H1 (cell line): ENCODE measurements at regions of chr22 and their contacts with region 1.

Region 1: GRCh38 chr22:41919357-41920224 is 4.7 kb upstream of the SHISA8 start:
- DNase-seq: peak; percentile 72 to 98
- H3K4me3 ChIP-seq: peak overlapping the region; percentile 33 to 67 (median 34)
- H3K27ac ChIP-seq: no peak overlapping the region
- H3K4me1 ChIP-seq: peaks cover 0 to 18% (median 8%) of the 10 kb centered on the region in 4 experiments; a peak in 5 of 7 replicates
- H3K27me3 ChIP-seq: peaks cover 30 to 82% (median 72%) of the 10 kb centered on the region in 4 experiments
- CTCF ChIP-seq: no peak
- EP300 ChIP-seq: no peak
- POLR2A ChIP-seq: peak in 1 of 2 experiments; percentile 36; a peak in 1 of 3 replicates
- RAD21 ChIP-seq: no peak

Region 2: GRCh38 chr22:41876275-41876674 is 43.3 kb before region 1 on chr22:
- CTCF ChIA-PET with region 1: no interaction called
- POLR2A ChIA-PET with region 1: no interaction called
- DNase-seq: no peak
- H3K4me3 ChIP-seq: no peak overlapping the region
- H3K27ac ChIP-seq: no peak overlapping the region
- H3K4me1 ChIP-seq: no peaks in the 10 kb centered on the region
- H3K27me3 ChIP-seq: no peaks in the 10 kb centered on the region
- CTCF ChIP-seq: no peak
- EP300 ChIP-seq: no peak
- POLR2A ChIP-seq: no peak
- RAD21 ChIP-seq: no peak

Region 3: GRCh38 chr22:41935015-41935351 is 15.4 kb after region 1 on chr22:
- CTCF ChIA-PET with region 1: interaction called, 77 read pairs
- POLR2A ChIA-PET with region 1: interaction called, 15 read pairs
- DNase-seq: no peak
- H3K4me3 ChIP-seq: no peak overlapping the region
- H3K27ac ChIP-seq: no peak overlapping the region
- H3K4me1 ChIP-seq: no peaks in the 10 kb centered on the region; a peak in 1 of 7 replicates
- H3K27me3 ChIP-seq: no peaks in the 10 kb centered on the region; a peak in 2 of 7 replicates
- CTCF ChIP-seq: no peak
- EP300 ChIP-seq: no peak
- POLR2A ChIP-seq: no peak
- RAD21 ChIP-seq: no peak

Region 4: GRCh38 chr22:41966607-41967240 is 47.1 kb after region 1 on chr22:
- CTCF ChIA-PET with region 1: no interaction called
- POLR2A ChIA-PET with region 1: no interaction called
- DNase-seq: peak in 1 of 2 experiments; percentile 62
- H3K4me3 ChIP-seq: no peak overlapping the region
- H3K27ac ChIP-seq: no peak overlapping the region
- H3K4me1 ChIP-seq: peaks cover 1 to 18% (median 4%) of the 10 kb centered on the region in 4 experiments; a peak in 6 of 7 replicates
- H3K27me3 ChIP-seq: no peaks in the 10 kb centered on the region; a peak in 2 of 7 replicates
- CTCF ChIP-seq: peak; percentile 18 to 63 (median 56)
- EP300 ChIP-seq: no peak
- POLR2A ChIP-seq: no peak
- RAD21 ChIP-seq: peak; percentile 75 to 80